Dendritic cell treated with granulocyte-macrophage colony-stimulating factor and Interleukin-4, amounts not matched to agents 40 ng/mL and 50 ng/mL, for 4 days (primary cell): ENCODE measurements at regions of chr13 and their contacts with region 1.

Region 1: GRCh38 chr13:72727417-72728289 is at the starts of genes BORA and MZT1:
- H3K4me3 Mint-ChIP-seq: peak within 1 kb of the TSS; percentile 95
- H3K27ac Mint-ChIP-seq: peak within 1 kb of the TSS; percentile 92
- H3K4me1 Mint-ChIP-seq: peaks cover 38% of the 10 kb centered on the region
- H3K27me3 Mint-ChIP-seq: no peaks in the 10 kb centered on the region

Region 2: DNA sequence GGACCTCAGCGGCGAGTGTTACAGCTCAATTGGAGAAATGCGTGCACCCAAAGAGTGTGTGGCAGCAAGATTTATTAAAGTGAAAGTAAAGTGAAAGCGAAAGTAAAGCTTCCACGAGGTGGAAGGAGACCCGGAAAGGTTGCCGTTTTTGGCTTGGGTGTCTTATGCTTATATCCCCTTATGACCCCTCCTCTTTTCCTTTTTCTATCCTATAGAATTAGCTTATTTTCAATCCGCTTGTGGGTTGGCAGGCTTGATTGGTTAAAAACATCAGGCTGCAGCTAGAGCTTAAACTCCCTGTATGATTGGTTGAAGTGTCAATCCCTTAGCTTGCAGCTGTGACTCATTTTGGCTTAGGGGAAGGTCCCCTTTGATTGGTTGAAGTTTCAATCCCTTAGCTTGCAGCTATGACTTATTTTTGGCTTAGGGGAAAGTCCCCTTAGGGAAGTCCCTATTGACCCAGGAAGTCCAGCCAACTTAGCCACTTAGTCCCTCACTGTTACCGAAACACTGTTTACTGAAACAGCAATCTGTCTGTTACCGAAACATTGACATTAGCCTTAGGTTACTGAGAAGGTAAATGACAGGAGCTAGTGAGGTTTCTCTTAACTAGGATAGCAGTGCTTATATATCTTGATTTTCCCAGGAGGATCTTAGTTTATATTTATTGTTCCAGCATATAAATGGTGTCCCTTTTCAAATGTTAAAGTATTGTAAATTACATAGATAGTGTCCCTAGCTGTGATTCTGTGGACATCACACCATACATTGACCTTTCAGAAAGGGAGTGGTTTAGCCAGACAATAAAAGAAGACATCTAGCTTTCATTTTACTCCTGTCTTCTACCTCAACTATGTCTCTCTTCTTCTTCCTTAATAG is 1436.5 kb before region 1 on chr13:
- intact Hi-C with region 1: loop called (anchors 10 kb)
- H3K4me3 Mint-ChIP-seq: peak overlapping the region; percentile 74
- H3K27ac Mint-ChIP-seq: peak overlapping the region; percentile 86
- H3K4me1 Mint-ChIP-seq: no peaks in the 10 kb centered on the region
- H3K27me3 Mint-ChIP-seq: peaks cover 2% of the 10 kb centered on the region

Region 3: GRCh38 chr13:72781451-72782439 is 54.1 kb after region 1 on chr13 and contains the starts of genes DIS3 and PIBF1:
- intact Hi-C with region 1: loop called (anchors 1 kb)
- H3K4me3 Mint-ChIP-seq: peak within 1 kb of the TSS; percentile 98
- H3K27ac Mint-ChIP-seq: peak within 1 kb of the TSS; percentile 96
- H3K4me1 Mint-ChIP-seq: peaks cover 38% of the 10 kb centered on the region
- H3K27me3 Mint-ChIP-seq: no peaks in the 10 kb centered on the region

Region 4: DNA sequence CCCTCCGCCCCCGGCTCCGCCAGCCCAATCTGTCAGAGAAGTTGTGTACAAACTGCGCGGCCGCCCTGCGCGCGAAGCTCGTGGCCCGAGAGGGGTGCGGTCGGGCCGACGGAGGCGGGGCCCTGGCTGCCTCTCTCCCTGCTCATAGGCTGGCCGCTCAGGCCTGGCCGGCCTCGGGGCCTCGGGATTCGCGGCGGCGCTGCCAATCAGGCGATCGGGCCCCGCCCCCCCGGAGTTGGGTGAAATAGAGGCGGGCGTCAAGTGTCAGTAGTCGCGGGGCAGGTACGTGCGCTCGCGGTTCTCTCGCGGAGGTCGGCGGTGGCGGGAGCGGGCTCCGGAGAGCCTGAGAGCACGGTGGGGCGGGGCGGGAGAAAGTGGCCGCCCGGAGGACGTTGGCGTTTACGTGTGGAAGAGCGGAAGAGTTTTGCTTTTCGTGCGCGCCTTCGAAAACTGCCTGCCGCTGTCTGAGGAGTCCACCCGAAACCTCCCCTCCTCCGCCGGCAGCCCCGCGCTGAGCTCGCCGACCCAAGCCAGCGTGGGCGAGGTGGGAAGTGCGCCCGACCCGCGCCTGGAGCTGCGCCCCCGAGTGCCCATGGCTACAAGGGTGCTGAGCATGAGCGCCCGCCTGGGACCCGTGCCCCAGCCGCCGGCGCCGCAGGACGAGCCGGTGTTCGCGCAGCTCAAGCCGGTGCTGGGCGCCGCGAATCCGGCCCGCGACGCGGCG is 331.2 kb after region 1 on chr13 and contains the start of gene KLF5:
- intact Hi-C with region 1: loop called (anchors 10 kb)
- H3K4me3 Mint-ChIP-seq: peak within 1 kb of the TSS; percentile 76
- H3K27ac Mint-ChIP-seq: peak within 1 kb of the TSS; percentile 48
- H3K4me1 Mint-ChIP-seq: peaks cover 18% of the 10 kb centered on the region
- H3K27me3 Mint-ChIP-seq: peaks cover 47% of the 10 kb centered on the region

Region 5: GRCh38 chr13:73173279-73173811 is 445.7 kb after region 1 on chr13:
- intact Hi-C with region 1: no loop called
- H3K4me3 Mint-ChIP-seq: no peak overlapping the region
- H3K27ac Mint-ChIP-seq: no peak overlapping the region
- H3K4me1 Mint-ChIP-seq: no peaks in the 10 kb centered on the region
- H3K27me3 Mint-ChIP-seq: no peaks in the 10 kb centered on the region